Mammary epithelial cell (primary cell): ENCODE measurements at regions of chr9 and their contacts with region 1.

Region 1: GRCh38 chr9:121686930-121687541 is 35.6 kb downstream of the DAB2IP start:
- DNase-seq: peak; percentile 57
- H3K4me3 ChIP-seq: no peak overlapping the region
- H3K27ac ChIP-seq: no peak overlapping the region
- H3K4me1 ChIP-seq: no peaks in the 10 kb centered on the region
- H3K27me3 ChIP-seq: no peaks in the 10 kb centered on the region
- CTCF ChIP-seq: peak; percentile 95 to 98

Region 2: DNA sequence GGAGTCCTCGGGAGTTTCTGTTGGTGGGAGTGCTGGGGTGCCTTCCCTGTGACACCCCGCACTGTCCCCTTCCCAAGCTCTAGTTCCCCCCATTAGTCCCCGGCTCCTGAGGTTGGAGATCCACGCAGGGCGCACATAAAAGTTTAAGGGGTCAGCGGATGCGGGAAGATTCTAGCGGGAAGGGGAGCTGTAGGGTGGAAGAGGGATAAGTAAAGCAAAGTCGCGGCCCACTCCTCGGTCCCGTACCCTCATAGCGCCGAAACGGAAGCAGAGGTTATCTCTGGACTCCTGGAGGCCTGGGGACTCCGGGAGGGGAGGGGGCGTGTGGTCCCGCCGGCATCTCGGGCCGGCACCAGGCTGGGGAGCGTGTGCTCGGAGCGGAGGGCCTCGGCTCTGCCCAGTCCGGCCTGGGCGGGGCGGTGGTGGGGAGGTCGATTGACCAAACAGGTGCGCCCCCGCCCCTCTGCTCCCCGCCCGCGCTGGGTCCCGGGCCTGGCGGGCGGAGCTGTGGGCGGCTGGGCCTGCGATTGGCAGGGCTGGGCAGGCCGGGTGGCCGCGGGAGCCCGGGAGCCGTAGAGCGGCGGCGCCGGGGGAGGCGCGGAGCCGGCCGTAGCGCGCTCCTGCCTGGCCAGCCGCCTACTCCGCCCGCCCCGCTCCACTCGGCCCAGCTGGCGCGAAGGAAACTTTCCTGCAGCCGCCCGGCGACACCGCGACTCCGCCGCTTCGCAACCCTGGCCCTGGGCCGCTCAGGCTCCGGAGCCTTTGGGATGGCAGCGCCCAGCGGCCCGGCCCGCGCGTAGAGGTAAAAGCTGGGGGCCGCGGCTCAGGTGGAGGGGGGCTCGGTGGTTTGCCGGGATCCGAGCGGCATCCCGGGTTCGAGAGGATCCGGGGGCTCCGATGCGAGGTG is 87.8 kb before region 1 on chr9:
- CTCF ChIA-PET with region 1: interaction called, 8 read pairs
- dilution Hi-C with region 1: no loop called
- in situ Hi-C with region 1: no loop called
- intact Hi-C with region 1: loop called (anchors 2 kb)
- DNase-seq: peak; percentile 32
- H3K4me3 ChIP-seq: peak overlapping the region in 2 of 3 experiments; percentile 49 to 50
- H3K27ac ChIP-seq: no peak overlapping the region
- H3K4me1 ChIP-seq: peaks cover 12% of the 10 kb centered on the region
- H3K27me3 ChIP-seq: peaks cover 23% of the 10 kb centered on the region
- CTCF ChIP-seq: no peak

Region 3: DNA sequence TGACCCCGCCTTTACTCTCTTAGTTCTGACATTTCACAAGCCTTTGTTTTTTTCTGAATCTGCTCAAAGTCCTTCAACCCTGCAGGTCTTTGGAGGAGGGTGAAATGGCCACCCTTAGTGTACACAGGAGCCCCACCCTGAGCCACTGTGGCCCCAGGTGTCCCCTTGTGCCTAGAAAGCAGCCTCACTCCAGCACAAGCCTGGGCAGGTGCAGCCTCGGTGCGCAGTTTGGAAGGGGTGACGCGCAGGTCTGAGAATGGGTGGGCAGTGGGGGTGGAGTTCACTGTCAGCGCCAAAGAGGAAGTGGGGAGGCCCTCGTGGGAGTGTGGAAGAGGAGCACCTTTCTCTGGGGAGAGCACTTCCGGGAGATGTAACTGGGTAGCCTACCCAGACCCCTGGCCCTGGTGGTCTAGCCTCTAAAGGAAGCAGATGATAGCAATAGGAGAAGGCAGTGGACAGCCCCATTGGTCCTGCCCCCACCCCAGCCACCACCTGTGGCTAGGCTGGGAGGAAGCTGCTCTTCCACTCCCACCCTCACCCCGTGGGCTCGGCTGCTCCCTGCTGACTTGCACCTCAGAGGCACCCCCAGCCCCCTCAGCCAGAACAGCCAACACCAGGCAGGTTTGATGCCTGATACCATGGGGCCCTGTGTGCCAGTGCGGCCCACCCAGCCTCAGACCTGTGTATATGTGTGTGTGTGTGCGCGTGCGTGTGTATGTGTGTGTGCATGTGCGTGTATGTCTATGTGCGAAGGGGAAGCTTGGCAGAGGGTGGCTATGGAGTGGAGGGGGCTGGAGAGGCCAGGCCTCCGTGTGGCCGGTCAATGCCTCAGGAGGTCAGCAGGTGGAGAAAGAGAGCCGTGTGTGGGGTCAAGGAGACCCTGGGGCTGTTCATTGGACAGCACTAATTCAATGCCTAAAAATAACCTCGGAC is 52.4 kb before region 1 on chr9:
- CTCF ChIA-PET with region 1: interaction called, 3 read pairs
- dilution Hi-C with region 1: no loop called
- in situ Hi-C with region 1: no loop called
- intact Hi-C with region 1: loop called (anchors 1 kb)
- DNase-seq: no peak
- H3K4me3 ChIP-seq: no peak overlapping the region
- H3K27ac ChIP-seq: no peak overlapping the region
- H3K4me1 ChIP-seq: peaks cover 23% of the 10 kb centered on the region
- H3K27me3 ChIP-seq: no peaks in the 10 kb centered on the region
- CTCF ChIP-seq: peak in 1 of 2 donors; percentile 29

Region 4: DNA sequence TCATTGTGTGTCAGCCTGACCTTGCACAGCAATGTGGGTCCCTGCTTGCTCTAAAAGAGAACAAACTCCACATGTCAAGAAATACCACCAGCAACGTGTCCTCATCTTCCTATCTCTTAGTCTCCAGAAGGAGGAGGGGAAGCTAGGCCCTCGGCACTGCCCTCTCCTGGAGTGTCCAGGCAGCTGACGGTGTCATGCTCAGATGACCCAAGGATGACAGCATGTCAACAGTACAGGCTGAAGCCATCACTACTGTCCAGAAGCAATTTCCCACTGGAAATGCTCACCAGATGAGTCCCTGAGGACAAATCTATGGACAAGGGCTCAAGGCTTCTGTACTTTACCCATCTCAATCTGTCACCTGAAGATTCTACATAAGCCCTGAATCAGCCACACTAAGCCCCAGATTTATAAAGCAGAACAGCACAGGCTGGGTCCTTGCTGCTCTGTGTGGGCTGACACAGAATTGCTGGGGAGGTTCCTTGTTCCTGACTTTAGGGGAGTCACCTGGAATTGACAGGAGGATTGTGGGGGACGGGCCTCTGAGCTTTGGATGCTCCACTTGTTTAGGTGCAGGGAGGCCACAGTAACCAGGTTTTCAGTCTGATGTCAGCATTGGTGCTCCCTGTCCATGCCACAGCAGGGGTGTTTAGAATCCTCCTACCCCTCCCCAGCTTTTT is 174.6 kb after region 1 on chr9:
- CTCF ChIA-PET with region 1: interaction called, 5 read pairs
- dilution Hi-C with region 1: no loop called
- in situ Hi-C with region 1: no loop called
- intact Hi-C with region 1: loop called (anchors 1 kb)
- DNase-seq: no peak
- H3K4me3 ChIP-seq: no peak overlapping the region
- H3K27ac ChIP-seq: no peak overlapping the region
- H3K4me1 ChIP-seq: no peaks in the 10 kb centered on the region
- H3K27me3 ChIP-seq: no peaks in the 10 kb centered on the region
- CTCF ChIP-seq: peak; percentile 34 to 50

Region 5: DNA sequence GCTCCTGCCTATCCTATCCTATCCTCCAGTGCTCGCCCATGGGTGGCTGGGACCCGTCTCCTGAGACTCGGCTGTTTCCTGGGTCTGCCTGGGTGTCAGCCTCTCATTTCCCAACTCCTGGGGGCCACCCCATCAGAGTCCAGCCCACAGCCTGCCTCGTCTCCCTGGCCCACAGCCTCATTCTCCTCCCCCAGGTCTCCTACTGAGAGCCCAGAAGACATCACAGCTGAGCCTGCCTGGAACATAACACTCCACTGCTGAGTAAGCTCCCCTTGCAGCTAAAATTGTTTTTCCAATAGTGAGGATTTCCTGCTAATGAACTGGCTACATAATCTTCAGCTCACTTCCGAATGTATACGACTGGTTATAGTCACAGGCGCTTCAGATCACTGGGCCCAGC is 310.8 kb after region 1 on chr9:
- CTCF ChIA-PET with region 1: no interaction called
- dilution Hi-C with region 1: no loop called
- in situ Hi-C with region 1: loop called (anchors 5 kb)
- intact Hi-C with region 1: loop called (anchors 1 kb)
- DNase-seq: no peak
- H3K4me3 ChIP-seq: no peak overlapping the region
- H3K27ac ChIP-seq: no peak overlapping the region
- H3K4me1 ChIP-seq: no peaks in the 10 kb centered on the region
- H3K27me3 ChIP-seq: no peaks in the 10 kb centered on the region
- CTCF ChIP-seq: no peak

Region 6: DNA sequence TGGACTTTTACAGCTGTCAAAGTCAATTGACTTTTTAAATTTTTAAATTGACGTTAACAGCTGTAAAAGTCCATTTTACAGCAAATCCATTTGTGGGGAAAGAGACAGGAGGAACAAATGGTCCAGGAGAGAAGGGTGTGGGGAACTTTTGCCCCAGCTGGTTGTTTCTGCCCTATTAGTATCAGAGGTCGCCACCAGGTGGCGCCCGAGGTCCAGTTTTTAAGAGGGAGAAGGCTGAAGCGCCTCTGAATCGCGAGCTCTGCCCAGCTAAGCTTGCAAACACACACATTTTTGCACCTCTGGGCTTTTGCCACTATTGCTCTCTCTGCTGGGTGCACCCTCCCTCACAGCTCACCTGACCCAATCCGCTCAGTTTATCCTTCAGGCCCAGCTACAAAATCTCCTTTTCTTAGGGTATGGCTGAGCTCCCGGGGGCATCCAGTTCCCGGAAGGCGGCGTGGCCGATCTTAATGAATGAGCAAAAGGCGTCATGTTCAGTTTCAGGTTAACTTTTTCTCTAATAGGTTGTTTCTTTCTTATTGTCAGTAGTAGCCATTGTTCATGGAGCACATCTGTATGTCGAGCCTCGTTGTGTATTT is 412.3 kb after region 1 on chr9:
- CTCF ChIA-PET with region 1: interaction called, 3 read pairs
- dilution Hi-C with region 1: no loop called
- in situ Hi-C with region 1: no loop called
- intact Hi-C with region 1: loop called (anchors 5 kb)
- DNase-seq: peak; percentile 54
- H3K4me3 ChIP-seq: peak overlapping the region in 2 of 3 experiments; percentile 1 to 17
- H3K27ac ChIP-seq: no peak overlapping the region
- H3K4me1 ChIP-seq: no peaks in the 10 kb centered on the region
- H3K27me3 ChIP-seq: no peaks in the 10 kb centered on the region
- CTCF ChIP-seq: peak; percentile 76 to 81

Region 7: DNA sequence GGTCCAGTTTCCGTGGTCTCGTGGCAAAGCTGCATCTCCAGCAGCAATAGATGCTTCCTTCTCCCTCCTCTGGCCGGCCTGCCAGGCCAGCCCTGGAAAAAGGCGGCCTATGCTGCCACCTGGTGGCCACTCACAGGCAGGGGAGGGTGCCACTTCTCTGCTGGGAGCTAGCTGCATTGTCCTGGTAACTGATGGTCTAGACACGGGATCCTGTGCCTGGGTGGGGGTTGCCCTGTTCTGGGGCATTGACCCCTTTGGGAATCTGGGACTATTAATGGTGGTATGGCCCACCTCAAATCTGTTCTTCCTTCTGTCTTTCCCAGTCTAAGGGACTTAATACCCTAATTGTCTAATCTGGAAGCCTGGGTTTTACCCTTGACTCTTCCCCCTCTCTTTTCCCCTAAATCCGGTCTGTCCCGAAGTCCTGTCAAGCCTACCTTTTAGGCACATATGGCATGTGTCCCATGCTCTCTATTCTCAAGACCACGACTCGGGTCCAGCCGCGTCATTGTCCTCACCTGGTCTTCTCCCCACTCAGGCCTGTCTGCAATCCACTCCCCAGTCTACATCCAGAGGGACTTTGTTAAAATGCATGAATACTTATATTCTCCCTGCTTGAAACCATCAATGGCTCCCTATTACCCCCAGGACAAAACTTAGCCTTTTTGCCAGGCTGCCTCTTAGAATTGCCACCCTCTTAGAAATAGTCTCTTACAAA is 663.8 kb after region 1 on chr9:
- CTCF ChIA-PET with region 1: no interaction called
- dilution Hi-C with region 1: no loop called
- in situ Hi-C with region 1: no loop called
- intact Hi-C with region 1: loop called (anchors 10 kb)
- DNase-seq: peak; percentile 60
- H3K4me3 ChIP-seq: no peak overlapping the region
- H3K27ac ChIP-seq: no peak overlapping the region
- H3K4me1 ChIP-seq: peaks cover 13% of the 10 kb centered on the region
- H3K27me3 ChIP-seq: no peaks in the 10 kb centered on the region
- CTCF ChIP-seq: peak; percentile 94